GM12878 (cell line): ENCODE measurements at regions of chr2 and their contacts with region 1.

Region 1: DNA sequence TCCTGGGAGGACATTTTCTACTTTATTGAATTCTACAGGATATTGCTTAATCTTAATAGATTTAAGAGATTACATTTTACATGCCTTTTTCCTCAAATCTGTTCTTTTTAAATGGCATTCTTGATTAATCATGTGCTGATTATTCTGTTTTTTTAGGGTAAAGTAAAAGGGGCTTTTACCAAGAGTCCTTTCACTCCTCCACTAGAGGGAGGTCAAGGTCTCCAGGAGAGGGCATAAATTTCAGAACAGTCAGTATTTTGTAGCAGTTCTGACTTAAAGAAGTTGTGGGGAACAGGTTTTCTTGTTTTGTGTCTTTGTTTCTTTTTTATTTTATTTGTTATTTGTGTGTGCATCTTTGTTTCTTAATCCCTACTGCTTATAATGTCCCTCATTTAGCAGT is 25.4 kb downstream of the WDR75 start:
- DNase-seq: no peak
- ATAC-seq: peak; percentile 75
- H3K4me3 ChIP-seq: no peak overlapping the region
- H3K27ac ChIP-seq: no peak overlapping the region
- H3K4me1 ChIP-seq: peaks cover 12% of the 10 kb centered on the region; the same call in 1 of the 2 replicates
- H3K27me3 ChIP-seq: no peaks in the 10 kb centered on the region
- CTCF ChIP-seq: peak; percentile 37 to 47 (median 47)
- EP300 ChIP-seq: no peak
- POLR2A ChIP-seq: no peak
- RAD21 ChIP-seq: peak; percentile 40; the same call in 1 of the 2 replicates

Region 2: GRCh38 chr2:189440947-189441708 is 25.5 kb before region 1 on chr2 and contains the start of gene WDR75:
- CTCF ChIA-PET with region 1: interaction called, 4 read pairs
- POLR2A ChIA-PET with region 1: interaction called, 4 read pairs
- RAD21 ChIA-PET with region 1: no interaction called
- SMC1A ChIA-PET with region 1: interaction called, 15 read pairs
- in situ Hi-C with region 1: no loop called
- intact Hi-C with region 1: no loop called
- DNase-seq: peak; percentile 84
- ATAC-seq: peak; percentile 92
- H3K4me3 ChIP-seq: peak within 1 kb of the TSS; percentile 86
- H3K27ac ChIP-seq: peak within 1 kb of the TSS; percentile 71
- H3K4me1 ChIP-seq: peaks cover 28% of the 10 kb centered on the region
- H3K27me3 ChIP-seq: no peaks in the 10 kb centered on the region
- CTCF ChIP-seq: no peak
- EP300 ChIP-seq: 0 out of 4 replicates have a peak, but pooled peaks of 1 of the 2 experiments have one; percentile 33
- POLR2A ChIP-seq: peak; percentile 98
- RAD21 ChIP-seq: no peak
- polyA plus RNA-seq, gene WDR75: 53.1 to 55.2 TPM

Region 3: DNA sequence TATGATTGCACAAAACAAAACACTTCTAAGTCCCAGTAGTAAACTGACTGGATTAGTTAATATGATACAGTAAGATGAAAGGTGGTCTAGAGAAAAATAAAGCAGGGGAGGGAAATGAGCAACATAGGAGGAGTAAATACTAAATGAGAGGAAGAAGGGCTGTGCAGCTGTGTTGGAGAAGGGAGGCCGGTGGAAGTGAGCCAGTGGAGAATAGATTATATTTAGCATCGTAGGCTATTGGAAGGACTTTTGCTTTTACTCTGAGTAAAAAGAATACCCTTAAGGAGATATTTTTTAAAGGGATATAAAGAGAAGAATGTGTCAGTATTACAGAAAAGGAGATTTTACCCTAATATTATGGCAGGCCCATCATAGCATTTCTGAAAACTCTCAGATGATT is 12.7 kb before region 1 on chr2:
- CTCF ChIA-PET with region 1: interaction called, 4 read pairs
- POLR2A ChIA-PET with region 1: no interaction called
- RAD21 ChIA-PET with region 1: no interaction called
- SMC1A ChIA-PET with region 1: interaction called, 4 read pairs
- in situ Hi-C with region 1: no loop called
- intact Hi-C with region 1: loop called (anchors 2 kb)
- DNase-seq: no peak
- ATAC-seq: no peak
- H3K4me3 ChIP-seq: no peak overlapping the region
- H3K27ac ChIP-seq: no peak overlapping the region
- H3K4me1 ChIP-seq: no peaks in the 10 kb centered on the region
- H3K27me3 ChIP-seq: no peaks in the 10 kb centered on the region
- CTCF ChIP-seq: no peak
- EP300 ChIP-seq: no peak
- POLR2A ChIP-seq: no peak
- RAD21 ChIP-seq: no peak

Region 4: GRCh38 chr2:189633392-189633811 is 166.7 kb after region 1 on chr2:
- CTCF ChIA-PET with region 1: no interaction called
- POLR2A ChIA-PET with region 1: no interaction called
- RAD21 ChIA-PET with region 1: no interaction called
- SMC1A ChIA-PET with region 1: interaction called, 4 read pairs
- in situ Hi-C with region 1: no loop called
- intact Hi-C with region 1: loop called (anchors 5 kb)
- DNase-seq: no peak
- ATAC-seq: peak; percentile 66
- H3K4me3 ChIP-seq: no peak overlapping the region
- H3K27ac ChIP-seq: no peak overlapping the region
- H3K4me1 ChIP-seq: no peaks in the 10 kb centered on the region
- H3K27me3 ChIP-seq: no peaks in the 10 kb centered on the region
- CTCF ChIP-seq: peak in 2 of 3 experiments; percentile 26 to 29; a peak in 4 of 6 replicates
- EP300 ChIP-seq: no peak
- POLR2A ChIP-seq: no peak
- RAD21 ChIP-seq: 0 out of 2 replicates have a peak, but pooled peaks have one; percentile 14